GM18951 (cell line): ENCODE measurements at regions of chr21 and their contacts with region 1.

Region 1: DNA sequence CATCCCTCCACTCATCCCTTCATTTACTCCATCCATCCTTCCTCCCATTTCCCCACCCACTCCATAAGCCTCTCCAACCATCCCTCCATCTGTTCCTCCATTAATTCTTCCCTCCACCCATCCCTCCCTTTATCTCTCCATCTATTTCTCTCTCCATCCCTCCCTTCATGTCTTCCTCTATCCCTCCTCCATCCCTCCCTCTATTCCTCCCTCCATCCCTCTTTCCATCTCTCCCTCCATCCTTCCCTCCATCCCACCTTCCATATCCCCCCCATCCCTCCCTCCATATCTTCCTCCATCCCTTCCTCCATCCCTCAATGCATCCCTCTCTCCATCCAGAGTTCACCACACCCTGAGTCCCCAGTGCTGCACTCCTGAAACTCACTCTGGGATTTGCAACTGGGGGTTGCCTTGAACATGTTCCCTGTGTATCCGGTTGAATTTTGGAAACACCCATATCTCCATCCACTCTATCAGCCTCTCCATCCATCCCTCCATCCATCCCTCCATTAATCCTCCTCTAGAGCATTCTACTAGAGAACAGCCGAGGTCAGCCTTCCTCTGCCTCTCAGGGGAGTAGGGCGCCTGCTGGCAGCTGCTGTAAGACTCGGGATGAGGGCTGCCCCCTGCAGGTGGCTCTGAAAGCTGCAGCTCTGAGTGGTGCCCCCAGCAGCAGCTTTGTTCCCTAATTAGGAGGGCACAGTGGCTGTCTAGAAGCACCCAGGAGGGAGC is 39.4 kb downstream of the ABCG1 start:
- POLR2A ChIP-seq: no peak

Region 2: GRCh38 chr21:41269535-41269934 is 988.8 kb before region 1 on chr21:
- in situ Hi-C with region 1: loop called (anchors 10 kb)
- POLR2A ChIP-seq: no peak

Region 3: GRCh38 chr21:41796451-41797080 is 461.8 kb before region 1 on chr21:
- in situ Hi-C with region 1: no loop called
- POLR2A ChIP-seq: no peak

Region 4: DNA sequence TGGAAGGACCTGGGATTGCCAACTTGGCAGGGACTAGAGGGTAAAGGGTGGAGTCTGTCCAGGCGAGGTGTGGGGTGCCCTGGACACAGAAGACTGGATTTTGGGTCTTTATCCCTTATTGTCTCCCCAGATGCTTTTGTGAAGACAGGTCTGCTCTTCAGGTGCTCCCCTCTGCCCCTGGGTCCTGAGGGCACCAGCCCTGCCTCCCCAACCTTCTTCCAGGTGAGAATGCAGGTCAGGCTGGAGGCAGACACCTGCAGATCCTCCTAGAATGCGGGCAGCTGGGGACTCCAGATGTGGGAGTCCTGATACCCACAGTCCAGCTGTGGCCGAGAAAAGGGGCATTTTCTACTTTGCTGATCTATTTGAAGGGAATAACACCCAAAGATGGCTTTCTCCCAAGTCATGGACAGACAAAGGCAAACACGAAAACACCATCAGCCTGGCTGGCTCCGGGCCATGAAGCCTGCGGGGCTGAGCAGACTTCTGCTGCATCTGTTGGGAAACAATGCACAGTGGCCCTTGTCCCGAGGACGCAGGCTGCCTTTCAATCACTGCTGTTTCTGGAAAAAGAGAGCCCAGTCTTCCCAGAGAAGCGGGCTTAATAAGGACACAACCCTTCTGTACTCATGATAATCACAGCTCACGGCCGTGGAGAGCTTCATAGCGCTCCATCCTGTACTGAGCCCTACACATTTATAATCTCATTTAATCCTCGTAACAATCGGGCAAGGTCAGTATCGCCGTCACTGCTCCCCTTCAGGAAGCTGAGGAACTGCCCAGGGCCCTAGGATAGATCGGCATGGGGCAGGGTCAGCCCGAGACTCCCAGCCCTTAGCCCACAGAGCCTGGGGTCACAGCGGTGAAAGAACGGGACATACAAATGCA is 101.4 kb before region 1 on chr21:
- in situ Hi-C with region 1: loop called (anchors 10 kb)
- POLR2A ChIP-seq: no peak

Region 5: DNA sequence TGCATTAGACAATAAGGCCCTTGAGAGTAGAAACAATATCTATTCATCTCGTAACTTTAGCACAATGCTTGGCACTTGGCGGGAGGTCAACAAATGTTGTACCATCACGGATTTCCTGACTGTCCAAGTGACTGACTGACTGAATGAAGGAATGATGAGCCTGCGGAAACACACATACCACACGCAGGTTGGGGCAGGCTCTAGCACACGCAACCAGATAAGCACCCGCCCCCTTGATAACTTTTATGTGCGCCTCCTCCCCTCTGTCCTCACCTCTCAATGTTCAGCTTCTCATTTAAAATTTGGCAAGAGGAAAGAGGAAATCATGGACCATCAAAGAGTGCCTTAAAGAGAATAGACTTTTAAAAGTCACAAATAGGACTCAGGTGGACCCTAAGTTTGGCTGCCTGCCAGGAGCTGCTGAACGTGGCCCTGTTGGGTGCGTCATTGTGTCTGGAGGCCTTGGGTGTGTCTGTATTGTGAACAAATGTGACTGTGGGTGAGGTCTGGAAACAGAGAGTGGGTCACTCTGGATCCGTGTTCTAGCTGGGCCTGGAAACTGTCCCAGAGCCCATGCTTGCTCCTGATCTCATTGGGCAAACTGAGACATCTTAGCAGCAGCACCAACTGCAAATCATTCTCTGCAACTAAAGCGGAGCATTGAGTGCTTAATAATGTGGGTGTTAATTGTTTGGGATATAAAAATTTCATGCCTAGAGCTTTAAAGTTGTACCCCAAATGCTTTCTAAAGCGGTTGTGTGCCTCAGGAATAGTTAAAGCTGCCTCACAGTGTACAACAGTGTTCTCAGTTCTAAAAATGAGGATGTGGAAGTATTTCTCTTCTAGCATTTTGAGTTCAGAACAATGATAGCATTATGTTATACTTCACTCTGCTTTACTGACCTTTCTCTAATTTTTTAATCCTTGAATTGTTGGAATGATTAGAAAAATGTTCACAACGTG is 86.9 kb before region 1 on chr21:
- in situ Hi-C with region 1: loop called (anchors 10 kb)
- POLR2A ChIP-seq: no peak